ENCODE measurements at regions of chr1 and their contacts with region 1.

Region 1: GRCh38 chr1:171801487-171801891 is 20.0 kb downstream of the METTL13 start:
- DNase-seq: peak; percentile 51
- H3K4me3 ChIP-seq: no peak overlapping the region
- H3K27ac ChIP-seq: no peak overlapping the region
- H3K4me1 ChIP-seq: no peaks in the 10 kb centered on the region
- H3K27me3 ChIP-seq: no peaks in the 10 kb centered on the region
- CTCF ChIP-seq: peak; percentile 69 to 75
- POLR2A ChIP-seq: no peak

Region 2: GRCh38 chr1:171644805-171645483 is 156.5 kb before region 1 on chr1:
- CTCF ChIA-PET with region 1: interaction called, 61 read pairs
- POLR2A ChIA-PET with region 1: no interaction called
- dilution Hi-C with region 1: no loop called
- intact Hi-C with region 1: loop called (anchors 2 kb)
- DNase-seq: peak; percentile 86
- H3K4me3 ChIP-seq: no peak overlapping the region
- H3K27ac ChIP-seq: no peak overlapping the region
- H3K4me1 ChIP-seq: no peaks in the 10 kb centered on the region
- H3K27me3 ChIP-seq: peaks cover 0 to 2% of the 10 kb centered on the region in 2 experiments
- CTCF ChIP-seq: peak; percentile 78 to 86
- POLR2A ChIP-seq: no peak

Region 3: DNA sequence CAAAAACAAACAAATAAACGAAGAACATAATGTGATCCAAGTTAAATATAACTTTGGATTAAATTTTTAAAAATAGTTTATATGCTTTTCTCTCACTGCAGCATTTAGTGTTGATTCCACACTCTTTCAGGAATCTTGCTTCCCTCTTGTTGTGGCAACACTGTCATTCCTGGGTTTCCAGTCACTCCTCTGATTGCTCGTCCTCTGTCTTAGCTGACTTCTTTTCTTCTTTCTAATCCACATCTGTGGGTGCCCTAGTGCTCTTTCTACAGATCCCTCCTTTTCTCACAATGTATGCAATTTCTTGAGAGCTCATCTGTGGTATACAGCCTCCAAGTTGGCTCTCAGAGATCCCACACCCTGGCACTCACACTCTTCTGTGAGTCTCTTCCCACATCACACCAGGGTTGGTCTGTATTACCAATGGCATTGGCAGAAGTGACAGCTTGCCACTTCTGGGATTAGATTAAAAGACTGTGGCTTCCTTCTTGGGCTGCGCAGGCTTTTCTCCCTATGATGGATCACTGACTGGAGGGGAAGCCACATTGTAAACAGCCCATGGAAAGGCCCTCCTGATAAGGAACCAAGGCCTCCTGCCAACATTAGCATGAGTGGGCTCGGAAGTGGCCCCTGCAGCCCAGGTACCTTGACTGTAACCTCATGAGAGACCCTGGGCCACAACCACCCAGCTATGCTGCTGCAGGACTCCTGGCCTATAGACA is 137.5 kb before region 1 on chr1:
- CTCF ChIA-PET with region 1: no interaction called
- POLR2A ChIA-PET with region 1: no interaction called
- dilution Hi-C with region 1: no loop called
- intact Hi-C with region 1: no loop called
- DNase-seq: no peak
- H3K4me3 ChIP-seq: no peak overlapping the region
- H3K27ac ChIP-seq: no peak overlapping the region
- H3K4me1 ChIP-seq: no peaks in the 10 kb centered on the region
- H3K27me3 ChIP-seq: peaks cover 0 to 1% of the 10 kb centered on the region in 2 experiments
- CTCF ChIP-seq: no peak
- POLR2A ChIP-seq: no peak

Region 4: GRCh38 chr1:171817511-171818265 is 16.2 kb after region 1 on chr1:
- CTCF ChIA-PET with region 1: interaction called, 23 read pairs
- POLR2A ChIA-PET with region 1: no interaction called
- dilution Hi-C with region 1: no loop called
- intact Hi-C with region 1: no loop called
- DNase-seq: peak; percentile 53
- H3K4me3 ChIP-seq: no peak overlapping the region
- H3K27ac ChIP-seq: no peak overlapping the region
- H3K4me1 ChIP-seq: peaks cover 6% of the 10 kb centered on the region
- H3K27me3 ChIP-seq: peaks cover 0 to 2% of the 10 kb centered on the region in 2 experiments
- CTCF ChIP-seq: no peak
- POLR2A ChIP-seq: no peak

Region 5: GRCh38 chr1:171965777-171966176 is 164.3 kb after region 1 on chr1:
- CTCF ChIA-PET with region 1: interaction called, 17 read pairs
- POLR2A ChIA-PET with region 1: no interaction called
- dilution Hi-C with region 1: no loop called
- intact Hi-C with region 1: no loop called
- DNase-seq: no peak
- H3K4me3 ChIP-seq: no peak overlapping the region
- H3K27ac ChIP-seq: no peak overlapping the region
- H3K4me1 ChIP-seq: peaks cover 14% of the 10 kb centered on the region
- H3K27me3 ChIP-seq: peaks cover 0 to 2% of the 10 kb centered on the region in 2 experiments
- CTCF ChIP-seq: no peak
- POLR2A ChIP-seq: no peak

Region 6: DNA sequence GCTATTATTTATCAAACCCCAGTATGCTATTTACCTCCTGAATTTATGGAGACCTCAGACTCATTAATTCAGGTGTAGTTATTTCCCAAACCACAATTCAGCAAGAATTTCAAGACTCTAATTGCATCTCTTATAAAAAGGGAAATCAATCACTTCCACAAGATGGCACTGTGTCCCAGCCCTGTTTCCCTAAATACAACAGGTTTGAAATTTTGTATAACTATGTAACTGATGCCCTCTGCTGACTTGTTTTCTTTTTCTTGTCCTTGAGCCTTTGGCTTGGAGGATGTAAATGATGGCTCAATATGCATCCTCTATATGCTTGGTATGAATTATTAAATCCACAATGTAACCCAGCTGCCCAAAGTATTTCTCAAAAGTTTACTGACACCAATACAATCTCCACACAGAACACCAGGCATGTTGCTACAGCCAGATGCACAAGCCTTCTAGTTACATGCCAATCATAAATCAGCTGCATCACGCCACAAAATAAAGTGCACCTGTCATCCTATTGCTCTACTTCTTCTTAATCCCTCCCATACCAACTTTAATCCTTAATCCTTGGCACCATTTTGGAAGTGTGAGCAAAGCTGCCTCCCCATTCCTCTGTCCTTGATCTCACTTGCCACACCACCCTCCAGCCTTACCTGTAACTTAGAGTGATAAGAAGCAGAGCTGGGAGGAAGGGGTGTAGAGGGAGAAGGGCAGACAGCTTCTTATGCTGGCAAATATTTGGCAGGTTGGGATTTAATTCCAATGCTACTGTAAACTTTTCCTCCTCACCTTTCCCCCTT is 628.0 kb after region 1 on chr1:
- CTCF ChIA-PET with region 1: interaction called, 4 read pairs
- POLR2A ChIA-PET with region 1: no interaction called
- dilution Hi-C with region 1: no loop called
- intact Hi-C with region 1: loop called (anchors 1 kb)
- DNase-seq: peak; percentile 78
- H3K4me3 ChIP-seq: no peak overlapping the region
- H3K27ac ChIP-seq: no peak overlapping the region
- H3K4me1 ChIP-seq: no peaks in the 10 kb centered on the region
- H3K27me3 ChIP-seq: no peaks in the 10 kb centered on the region
- CTCF ChIP-seq: peak; percentile 47 to 64
- POLR2A ChIP-seq: no peak